ENCODE measurements at regions of chr12 and their contacts with region 1.

Region 1: GRCh38 chr12:80186727-80187217 is 87.4 kb downstream of the OTOGL start:
- DNase-seq: peak; percentile 88
- H3K4me3 Mint-ChIP-seq: no peak overlapping the region
- H3K27ac Mint-ChIP-seq: no peak overlapping the region
- H3K4me1 Mint-ChIP-seq: peaks cover 19% of the 10 kb centered on the region
- H3K27me3 Mint-ChIP-seq: no peaks in the 10 kb centered on the region
- CTCF ChIP-seq: peak; percentile 78

Region 2: GRCh38 chr12:79555028-79555930 is 631.5 kb before region 1 on chr12:
- CTCF ChIA-PET with region 1: no interaction called
- POLR2A ChIA-PET with region 1: no interaction called
- intact Hi-C with region 1: loop called (anchors 1 kb)
- DNase-seq: peak; percentile 49
- H3K4me3 Mint-ChIP-seq: no peak overlapping the region
- H3K27ac Mint-ChIP-seq: peak overlapping the region; percentile 32
- H3K4me1 Mint-ChIP-seq: peaks cover 16% of the 10 kb centered on the region
- H3K27me3 Mint-ChIP-seq: no peaks in the 10 kb centered on the region
- CTCF ChIP-seq: peak; percentile 41

Region 3: DNA sequence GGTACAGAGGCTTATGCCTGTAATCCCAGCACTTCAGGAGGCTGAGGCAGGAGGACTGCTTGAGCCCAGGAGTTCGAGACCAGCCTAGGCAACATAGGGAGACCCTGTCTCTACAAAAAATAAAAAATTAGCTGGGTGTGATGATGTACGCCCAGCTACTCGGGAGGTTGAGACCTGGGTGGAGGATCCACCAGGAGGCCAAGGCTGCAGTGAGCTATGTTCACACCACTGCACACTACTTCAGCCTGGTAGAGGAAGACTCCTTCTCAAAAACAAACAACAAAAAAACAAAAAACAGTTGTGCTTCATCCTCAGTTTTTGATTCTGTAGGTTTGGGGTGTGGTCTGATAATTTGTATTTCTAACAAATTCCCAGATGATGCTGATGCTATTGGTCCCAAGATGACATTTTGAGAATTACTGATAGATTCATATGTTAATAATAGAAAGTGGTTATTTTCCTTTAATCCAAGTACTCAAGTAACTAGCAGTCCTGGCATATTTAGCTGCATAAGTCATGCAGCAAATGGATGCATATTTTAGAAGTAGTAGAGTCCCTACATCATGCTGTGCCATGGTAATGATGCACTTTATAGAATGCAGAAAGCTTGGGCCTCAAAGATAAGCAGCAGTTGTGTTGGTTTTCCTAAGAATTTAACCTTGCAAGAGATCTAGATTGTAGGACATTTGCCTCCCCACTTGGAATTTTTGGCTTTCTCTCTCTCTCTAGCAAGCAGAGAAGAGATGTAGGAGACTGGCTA is 419.9 kb before region 1 on chr12:
- CTCF ChIA-PET with region 1: no interaction called
- POLR2A ChIA-PET with region 1: no interaction called
- intact Hi-C with region 1: loop called (anchors 10 kb)
- DNase-seq: no peak
- H3K4me3 Mint-ChIP-seq: no peak overlapping the region
- H3K27ac Mint-ChIP-seq: no peak overlapping the region
- H3K4me1 Mint-ChIP-seq: peaks cover 6% of the 10 kb centered on the region
- H3K27me3 Mint-ChIP-seq: no peaks in the 10 kb centered on the region
- CTCF ChIP-seq: no peak

Region 4: GRCh38 chr12:79935021-79935623 is 251.7 kb before region 1 on chr12 and contains the start of gene PPP1R12A:
- CTCF ChIA-PET with region 1: interaction called, 9 read pairs
- POLR2A ChIA-PET with region 1: interaction called, 7 read pairs
- intact Hi-C with region 1: loop called (anchors 1 kb)
- DNase-seq: peak; percentile 98
- H3K4me3 Mint-ChIP-seq: peak within 1 kb of the TSS; percentile 92
- H3K27ac Mint-ChIP-seq: peak within 1 kb of the TSS; percentile 96
- H3K4me1 Mint-ChIP-seq: peaks cover 13% of the 10 kb centered on the region
- H3K27me3 Mint-ChIP-seq: no peaks in the 10 kb centered on the region
- CTCF ChIP-seq: no peak
- total RNA-seq, gene PPP1R12A: 67.6 and 78.0 TPM in 2 replicates

Region 5: DNA sequence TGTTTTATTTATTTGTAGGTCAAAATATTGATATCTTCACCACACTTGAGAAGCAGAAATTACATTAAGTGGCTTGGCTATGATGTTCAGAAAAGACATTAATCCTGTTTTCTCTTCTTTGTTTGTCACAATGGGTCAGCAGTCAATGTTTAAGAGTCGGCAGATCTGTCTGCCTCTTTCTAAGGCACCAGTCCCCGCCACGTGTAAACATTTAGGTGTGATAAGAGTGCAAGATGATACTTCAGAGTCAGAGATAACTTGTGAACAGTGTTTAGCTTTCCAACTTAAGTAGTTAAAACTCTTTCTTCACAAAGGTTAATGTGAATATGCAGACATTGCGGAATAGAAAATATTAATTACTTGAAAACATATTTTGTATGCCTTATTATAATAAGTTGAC is 73.5 kb after region 1 on chr12:
- CTCF ChIA-PET with region 1: no interaction called
- POLR2A ChIA-PET with region 1: no interaction called
- intact Hi-C with region 1: no loop called
- DNase-seq: no peak
- H3K4me3 Mint-ChIP-seq: no peak overlapping the region
- H3K27ac Mint-ChIP-seq: no peak overlapping the region
- H3K4me1 Mint-ChIP-seq: no peaks in the 10 kb centered on the region
- H3K27me3 Mint-ChIP-seq: peaks cover 29% of the 10 kb centered on the region
- CTCF ChIP-seq: no peak

Region 6: GRCh38 chr12:80299976-80300375 is 113.2 kb after region 1 on chr12:
- CTCF ChIA-PET with region 1: no interaction called
- POLR2A ChIA-PET with region 1: no interaction called
- intact Hi-C with region 1: no loop called
- DNase-seq: no peak
- H3K4me3 Mint-ChIP-seq: no peak overlapping the region
- H3K27ac Mint-ChIP-seq: no peak overlapping the region
- H3K4me1 Mint-ChIP-seq: no peaks in the 10 kb centered on the region
- H3K27me3 Mint-ChIP-seq: no peaks in the 10 kb centered on the region
- CTCF ChIP-seq: no peak

Measured in MCF 10A (cell line).